ENCODE measurements at regions of chr6 and their contacts with region 1.

Region 1: GRCh38 chr6:53725791-53726431 is 60.4 kb upstream of the KLHL31 start:
- DNase-seq: peak; percentile 58 to 77 (median 65)
- H3K4me3 ChIP-seq: no peak overlapping the region
- H3K4me3 Mint-ChIP-seq: peak overlapping the region in 1 of 7 donors; percentile 32
- H3K27ac ChIP-seq: no peak overlapping the region
- H3K27ac Mint-ChIP-seq: no peak overlapping the region
- H3K4me1 ChIP-seq: no peaks in the 10 kb centered on the region
- H3K4me1 Mint-ChIP-seq: peaks cover 7 to 11% (median 10%) of the 10 kb centered on the region in 3 donors
- H3K27me3 ChIP-seq: no peaks in the 10 kb centered on the region
- H3K27me3 Mint-ChIP-seq: peaks cover 4 to 27% of the 10 kb centered on the region in 2 donors

Region 2: GRCh38 chr6:53492860-53493634 is 232.9 kb before region 1 on chr6:
- CTCF ChIA-PET with region 1: interaction called, 107 read pairs
- POLR2A ChIA-PET with region 1: no interaction called
- DNase-seq: peak in 2 of 5 donors; percentile 41
- H3K4me3 ChIP-seq: no peak overlapping the region
- H3K4me3 Mint-ChIP-seq: peak overlapping the region in 1 of 7 donors; percentile 42
- H3K27ac ChIP-seq: no peak overlapping the region
- H3K27ac Mint-ChIP-seq: peak overlapping the region in 2 of 8 donors; percentile 51 to 75
- H3K4me1 ChIP-seq: no peaks in the 10 kb centered on the region
- H3K4me1 Mint-ChIP-seq: peaks cover 0 to 4% (median 0%) of the 10 kb centered on the region in 3 donors
- H3K27me3 ChIP-seq: no peaks in the 10 kb centered on the region
- H3K27me3 Mint-ChIP-seq: peaks cover 8 to 16% of the 10 kb centered on the region in 2 donors

Region 3: DNA sequence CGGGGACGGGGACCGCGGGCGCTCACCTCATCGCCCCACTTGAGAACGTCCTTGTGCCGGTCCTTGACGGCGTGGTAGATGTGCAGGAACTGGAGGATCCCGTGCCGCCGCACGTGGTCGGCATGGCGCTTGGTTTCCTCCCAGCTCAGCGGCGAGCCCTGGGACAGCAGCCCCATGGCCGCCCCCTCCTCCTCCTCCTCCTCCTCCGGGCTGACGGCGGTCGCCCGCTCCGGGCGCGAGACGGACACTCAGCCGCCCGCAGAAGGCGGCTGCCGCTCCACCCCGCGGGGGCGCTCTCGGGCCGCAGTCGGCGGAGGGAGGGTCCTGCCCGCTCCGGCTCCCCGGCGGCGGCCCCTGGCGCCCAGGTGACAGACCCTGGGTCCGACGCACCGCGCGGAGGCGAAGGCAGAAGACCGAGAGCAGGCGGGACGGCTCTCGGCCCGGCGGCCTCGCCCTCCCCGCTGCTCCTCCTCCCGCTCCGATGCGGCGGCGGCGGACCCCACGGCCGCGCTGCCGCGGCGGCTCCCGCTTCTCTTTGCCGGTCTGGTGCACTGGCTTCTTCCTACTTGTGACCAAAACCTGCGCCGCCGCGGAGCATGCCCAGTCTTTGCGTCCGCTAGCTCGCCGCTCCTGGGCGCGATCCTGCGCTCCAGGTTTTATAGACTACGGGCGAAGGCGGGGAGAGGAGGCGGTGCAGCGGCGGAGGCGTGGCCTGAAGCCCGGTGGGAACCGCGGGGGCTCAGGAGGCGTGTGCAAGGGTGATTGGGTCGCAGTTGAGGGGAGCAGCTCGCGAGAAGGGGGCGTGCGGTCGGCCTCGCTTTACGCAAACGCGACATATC is 181.2 kb before region 1 on chr6 and contains the start of gene GCLC:
- CTCF ChIA-PET with region 1: interaction called, 10 read pairs
- POLR2A ChIA-PET with region 1: no interaction called
- DNase-seq: peak; percentile 80 to 91 (median 86)
- H3K4me3 ChIP-seq: peak within 1 kb of the TSS; percentile 52
- H3K4me3 Mint-ChIP-seq: peak within 1 kb of the TSS; percentile 90 to 98 (median 96)
- H3K27ac ChIP-seq: peak within 1 kb of the TSS; percentile 78
- H3K27ac Mint-ChIP-seq: peak within 1 kb of the TSS; percentile 78 to 97 (median 90)
- H3K4me1 ChIP-seq: peaks cover 31% of the 10 kb centered on the region
- H3K4me1 Mint-ChIP-seq: peaks cover 53 to 81% (median 78%) of the 10 kb centered on the region in 3 donors
- H3K27me3 ChIP-seq: no peaks in the 10 kb centered on the region
- H3K27me3 Mint-ChIP-seq: no peaks in the 10 kb centered on the region
- total RNA-seq, gene GCLC: 33.3 to 37.1 TPM

Region 4: DNA sequence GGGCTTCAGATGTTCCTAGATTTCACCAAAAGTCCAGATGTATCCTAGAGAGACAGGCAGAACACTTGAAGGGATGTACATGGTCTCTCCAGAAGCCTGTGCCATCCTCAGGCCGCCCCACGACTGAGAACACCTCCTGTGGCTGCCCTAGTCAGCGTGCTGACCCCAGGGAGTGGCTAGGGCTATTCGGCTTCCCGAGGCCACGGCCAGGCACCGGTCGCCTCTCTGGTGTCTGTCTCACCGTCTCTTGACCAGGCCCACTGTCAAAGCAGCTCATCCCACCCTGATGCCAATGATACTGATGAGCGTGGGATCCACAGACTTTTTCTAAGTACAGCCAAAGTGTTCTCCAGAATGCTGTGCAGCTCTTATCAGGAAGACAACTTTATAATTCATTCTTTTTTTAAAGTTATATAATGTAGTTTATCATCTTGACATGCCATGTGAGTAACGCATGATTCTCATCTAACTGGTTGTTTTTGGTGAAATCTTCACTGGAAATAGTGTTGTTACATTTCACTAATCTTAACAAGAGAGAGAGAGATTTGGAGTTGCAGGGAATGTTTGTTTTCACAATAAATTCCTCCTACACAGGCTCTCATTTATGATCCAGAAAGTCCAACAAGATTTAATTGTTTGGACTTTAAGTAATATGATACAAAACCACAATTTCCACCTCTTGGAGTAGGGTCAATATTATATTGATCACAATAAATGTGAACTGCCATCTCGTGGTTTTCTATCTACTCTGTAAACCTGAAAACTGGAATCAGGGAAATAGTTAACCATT is 18.6 kb before region 1 on chr6:
- CTCF ChIA-PET with region 1: interaction called, 61 read pairs
- POLR2A ChIA-PET with region 1: no interaction called
- DNase-seq: no peak
- H3K4me3 ChIP-seq: no peak overlapping the region
- H3K4me3 Mint-ChIP-seq: no peak overlapping the region
- H3K27ac ChIP-seq: no peak overlapping the region
- H3K27ac Mint-ChIP-seq: no peak overlapping the region
- H3K4me1 ChIP-seq: no peaks in the 10 kb centered on the region
- H3K4me1 Mint-ChIP-seq: no peaks in the 10 kb centered on the region
- H3K27me3 ChIP-seq: no peaks in the 10 kb centered on the region
- H3K27me3 Mint-ChIP-seq: peaks cover 12 to 33% of the 10 kb centered on the region in 2 donors